HCT116 (cell line): ENCODE measurements at regions of chrX and their contacts with region 1.

Region 1: GRCh38 chrX:2474280-2474962 is 26.4 kb downstream of the DHRSX start:
- DNase-seq: peak; percentile 94
- ATAC-seq: peak; percentile 34
- H3K4me3 ChIP-seq: peak overlapping the region; percentile 26 to 43
- H3K27ac ChIP-seq: peak overlapping the region; percentile 77
- H3K4me1 ChIP-seq: peaks cover 22 to 78% of the 10 kb centered on the region in 2 experiments; a peak in 3 of 4 replicates
- H3K27me3 ChIP-seq: no peaks in the 10 kb centered on the region
- CTCF ChIP-seq: no peak
- POLR2A ChIP-seq: no peak
- RAD21 ChIP-seq: no peak

Region 2: DNA sequence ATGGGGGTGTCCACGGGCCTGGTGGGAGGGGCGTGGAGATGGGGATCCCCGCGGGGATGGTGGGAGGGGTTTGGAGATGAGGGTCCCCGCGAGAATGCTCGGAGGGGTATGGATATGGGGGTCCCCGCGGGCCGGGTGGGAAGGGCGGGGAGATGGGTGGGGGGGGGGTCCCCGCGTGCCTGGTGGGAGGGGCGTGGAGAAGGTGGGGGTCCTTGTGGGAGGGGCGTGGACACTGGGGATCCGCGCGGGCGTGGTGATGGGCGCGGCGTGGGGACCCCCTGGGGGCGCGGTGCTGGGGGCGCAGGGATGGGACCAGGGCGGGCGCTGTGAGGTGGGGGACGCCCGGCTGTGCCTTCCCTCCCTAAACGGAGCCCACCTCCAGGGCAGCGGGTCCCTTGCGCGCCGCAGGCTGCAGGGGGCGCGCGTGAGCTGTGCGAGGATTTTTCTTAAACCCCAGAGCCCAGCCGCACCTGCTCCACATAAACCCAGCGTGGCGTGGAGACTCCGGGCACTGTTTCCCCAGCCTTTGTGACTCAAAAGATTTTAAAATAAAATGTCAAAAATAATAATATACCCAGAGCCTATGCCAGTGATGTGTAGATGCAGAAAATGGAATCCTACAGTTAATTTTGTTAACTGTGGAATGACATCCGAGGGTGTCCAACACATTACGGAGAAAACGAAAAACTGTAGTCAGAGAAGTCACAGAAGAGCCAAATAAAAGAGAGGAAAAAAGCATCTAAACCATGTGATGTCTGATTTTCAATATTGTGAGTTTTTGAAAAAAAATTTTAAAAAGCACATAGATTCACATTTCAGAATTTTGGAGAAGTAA is 1020.3 kb before region 1 on chrX:
- CTCF ChIA-PET with region 1: no interaction called
- POLR2A ChIA-PET with region 1: no interaction called
- RAD21 ChIA-PET with region 1: no interaction called
- intact Hi-C with region 1: loop called (anchors 5 kb)
- DNase-seq: peak; percentile 36
- ATAC-seq: peak; percentile 41
- H3K4me3 ChIP-seq: no peak overlapping the region
- H3K27ac ChIP-seq: no peak overlapping the region
- H3K4me1 ChIP-seq: peaks cover 0 to 8% of the 10 kb centered on the region in 2 experiments; a peak in 1 of 4 replicates
- H3K27me3 ChIP-seq: 0 out of 2 replicates have a peak, but pooled peaks cover 2% of the 10 kb centered on the region
- CTCF ChIP-seq: peak in 2 of 3 experiments; percentile 71 to 86; a peak in 4 of 6 replicates
- POLR2A ChIP-seq: no peak
- RAD21 ChIP-seq: no peak

Region 3: DNA sequence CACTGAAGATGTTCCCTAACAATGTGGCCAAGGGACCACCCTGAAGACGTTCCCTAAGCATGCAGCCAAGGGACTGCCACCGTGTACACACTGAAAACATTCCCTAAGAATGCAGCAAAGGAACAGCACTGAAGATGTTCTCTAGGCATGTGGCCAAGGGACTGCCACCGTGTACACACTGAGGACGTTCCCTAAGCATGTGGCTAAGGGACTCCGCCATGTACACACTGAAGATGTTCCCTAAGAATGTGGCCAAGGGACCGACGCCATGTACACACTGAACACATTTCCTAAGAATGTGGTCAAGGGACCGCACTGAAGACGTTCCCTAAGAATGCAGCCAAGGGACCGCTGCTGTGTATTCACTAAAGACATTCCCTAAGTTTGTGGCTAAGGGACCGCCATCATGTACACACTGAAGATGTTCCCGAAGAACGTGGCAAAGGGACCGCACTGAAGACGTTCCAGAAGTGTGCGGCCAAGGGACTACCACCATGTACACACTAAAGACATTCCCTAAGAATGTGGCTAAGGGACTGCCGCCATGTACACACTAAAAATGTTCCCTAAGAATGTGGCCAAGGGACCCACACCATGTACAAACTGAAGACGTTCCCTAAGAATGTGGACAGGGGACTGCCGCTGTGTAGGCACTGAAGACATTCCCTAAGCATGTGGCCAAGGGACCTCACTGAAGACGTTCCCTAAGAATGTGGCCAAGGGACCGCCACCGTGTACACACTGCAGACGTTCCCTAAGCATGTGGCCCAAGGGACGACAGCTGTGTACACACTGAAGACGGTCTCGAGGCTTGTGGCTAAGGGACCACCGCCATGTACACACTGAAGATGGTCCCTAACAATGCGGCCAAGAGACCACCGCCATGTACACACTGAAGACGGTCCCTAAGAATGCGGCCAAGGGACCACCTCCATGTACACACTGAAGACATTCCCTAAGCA is 28.5 kb before region 1 on chrX:
- CTCF ChIA-PET with region 1: no interaction called
- POLR2A ChIA-PET with region 1: no interaction called
- RAD21 ChIA-PET with region 1: no interaction called
- intact Hi-C with region 1: loop called (anchors 1 kb)
- DNase-seq: peak; percentile 97
- ATAC-seq: peak; percentile 78
- H3K4me3 ChIP-seq: peak overlapping the region in 1 of 2 experiments; percentile 19; a peak in 1 of 4 replicates
- H3K27ac ChIP-seq: peak overlapping the region; percentile 74
- H3K4me1 ChIP-seq: peaks cover 7 to 32% of the 10 kb centered on the region in 2 experiments
- H3K27me3 ChIP-seq: no peaks in the 10 kb centered on the region
- CTCF ChIP-seq: no peak
- POLR2A ChIP-seq: no peak
- RAD21 ChIP-seq: no peak

Region 4: DNA sequence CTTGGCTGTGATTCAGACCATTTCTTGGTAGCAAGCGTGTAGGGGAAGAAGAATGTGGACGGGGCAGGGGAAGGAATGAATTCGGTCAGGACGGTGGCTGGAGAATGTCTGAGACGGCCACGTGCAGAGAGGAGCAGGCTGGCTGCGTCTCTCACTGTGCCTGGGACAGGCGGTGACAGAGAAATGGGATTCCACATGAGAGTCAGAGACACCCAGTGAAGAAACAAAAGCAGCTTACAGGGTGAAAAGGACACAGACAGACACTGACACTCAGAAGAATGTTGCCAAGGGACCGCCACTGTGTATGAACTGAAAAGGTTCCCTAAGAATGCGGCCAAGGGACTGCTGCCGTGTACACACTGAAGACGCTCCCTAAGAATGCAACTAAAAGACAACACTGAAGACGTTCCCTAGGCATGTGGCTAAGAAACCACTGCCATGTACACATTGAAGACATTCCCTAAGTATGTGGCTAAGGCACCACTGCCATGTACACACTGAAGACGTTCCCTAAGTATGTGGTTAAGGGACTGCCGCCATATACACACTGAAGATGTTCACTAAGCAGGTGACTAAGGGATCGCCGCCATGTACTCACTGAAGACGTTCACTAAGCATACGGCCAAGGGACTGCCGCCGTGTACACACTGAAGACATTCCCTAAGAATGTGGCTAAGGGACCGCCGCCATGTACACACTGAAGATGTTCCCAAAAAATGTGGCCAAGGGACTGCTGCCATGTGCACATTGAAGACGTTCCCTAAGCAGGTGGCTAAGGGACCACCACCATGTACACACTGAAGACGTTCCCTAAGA is 22.7 kb before region 1 on chrX:
- CTCF ChIA-PET with region 1: no interaction called
- POLR2A ChIA-PET with region 1: no interaction called
- RAD21 ChIA-PET with region 1: no interaction called
- intact Hi-C with region 1: loop called (anchors 1 kb)
- DNase-seq: peak; percentile 93
- ATAC-seq: peak; percentile 72
- H3K4me3 ChIP-seq: peak overlapping the region; percentile 25 to 50
- H3K27ac ChIP-seq: peak overlapping the region; percentile 93
- H3K4me1 ChIP-seq: peaks cover 12 to 50% of the 10 kb centered on the region in 2 experiments
- H3K27me3 ChIP-seq: no peaks in the 10 kb centered on the region
- CTCF ChIP-seq: no peak
- POLR2A ChIP-seq: no peak
- RAD21 ChIP-seq: no peak

Region 5: DNA sequence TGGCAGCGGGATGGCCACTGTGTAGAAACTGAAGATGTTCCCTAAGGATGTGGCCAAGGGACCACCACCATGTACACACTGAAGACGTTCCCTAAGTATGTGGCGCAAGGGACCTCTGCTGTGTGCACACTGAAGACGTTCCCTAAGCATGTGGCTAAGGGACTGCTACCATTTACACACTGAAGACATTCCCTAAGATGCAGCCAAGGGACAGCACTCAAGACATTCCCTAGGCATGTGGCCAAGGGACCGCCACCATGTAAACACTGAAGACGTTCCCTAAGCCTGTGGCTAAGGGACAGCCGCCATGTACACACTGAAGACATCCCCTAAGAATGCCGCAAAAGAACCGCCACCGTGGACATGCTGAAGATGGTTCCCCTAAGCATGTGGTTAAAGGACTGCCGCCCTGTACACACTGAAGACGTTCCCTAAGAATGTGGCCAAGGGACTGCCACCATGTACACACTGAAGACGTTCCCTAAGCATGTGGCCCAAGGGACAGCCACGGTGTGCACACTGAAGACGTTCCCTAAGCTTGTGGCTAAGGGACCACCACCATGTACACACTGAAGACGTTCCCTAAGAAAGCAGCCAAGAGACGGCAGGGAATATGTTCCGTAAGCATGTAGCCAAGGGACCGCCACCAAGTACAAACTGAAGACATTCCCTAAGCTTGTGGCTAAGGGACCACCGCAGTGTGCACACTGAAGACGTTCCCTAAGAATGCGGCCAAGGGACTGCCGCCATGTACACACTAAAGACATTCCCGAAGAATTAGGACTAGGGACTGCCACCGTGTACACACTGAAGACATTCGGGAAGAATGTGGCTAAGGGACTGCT is 16.9 kb before region 1 on chrX:
- CTCF ChIA-PET with region 1: no interaction called
- POLR2A ChIA-PET with region 1: no interaction called
- RAD21 ChIA-PET with region 1: no interaction called
- intact Hi-C with region 1: loop called (anchors 1 kb)
- DNase-seq: peak; percentile 98
- ATAC-seq: peak; percentile 67
- H3K4me3 ChIP-seq: peak overlapping the region; percentile 24 to 47
- H3K27ac ChIP-seq: peak overlapping the region; percentile 93
- H3K4me1 ChIP-seq: peaks cover 12 to 44% of the 10 kb centered on the region in 2 experiments
- H3K27me3 ChIP-seq: no peaks in the 10 kb centered on the region
- CTCF ChIP-seq: no peak
- POLR2A ChIP-seq: no peak
- RAD21 ChIP-seq: no peak

Region 6: DNA sequence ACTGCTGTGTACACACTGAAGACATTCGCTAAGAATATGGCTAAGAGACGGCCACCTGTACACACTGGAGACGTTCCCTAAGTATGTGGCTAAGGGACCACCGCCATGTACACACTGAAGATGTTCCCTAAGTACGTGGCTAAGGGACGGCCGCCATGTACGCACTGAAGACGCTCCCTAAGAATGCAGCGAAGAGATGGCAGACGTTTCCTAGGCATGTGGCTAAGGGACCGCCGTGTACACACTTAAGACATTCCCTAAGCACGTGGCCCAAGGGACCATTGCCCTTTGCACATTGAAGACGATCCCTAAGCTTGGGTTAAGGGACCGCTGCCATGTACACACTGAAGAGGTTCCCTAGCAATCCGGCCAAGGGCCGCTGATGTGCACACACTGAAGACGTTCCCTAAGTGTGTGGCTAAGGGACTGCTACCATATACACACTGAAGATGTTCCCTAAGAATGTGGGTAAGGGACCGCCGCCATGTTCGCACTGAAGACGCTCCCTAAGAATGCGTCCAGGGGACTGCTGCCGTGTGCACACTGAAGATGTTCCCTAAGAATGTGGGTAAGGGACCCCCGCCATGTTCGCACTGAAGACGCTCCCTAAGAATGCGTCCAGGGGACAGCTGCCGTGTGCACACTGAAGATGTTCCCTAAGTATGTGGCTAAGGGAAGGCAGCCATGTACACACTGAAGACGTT is 10.3 kb before region 1 on chrX:
- CTCF ChIA-PET with region 1: no interaction called
- POLR2A ChIA-PET with region 1: no interaction called
- RAD21 ChIA-PET with region 1: no interaction called
- intact Hi-C with region 1: loop called (anchors 1 kb)
- DNase-seq: peak; percentile 99
- ATAC-seq: peak; percentile 71
- H3K4me3 ChIP-seq: peak overlapping the region; percentile 47 to 57
- H3K27ac ChIP-seq: peak overlapping the region; percentile 92
- H3K4me1 ChIP-seq: peaks cover 10 to 51% of the 10 kb centered on the region in 2 experiments; a peak in 3 of 4 replicates
- H3K27me3 ChIP-seq: no peaks in the 10 kb centered on the region
- CTCF ChIP-seq: no peak
- POLR2A ChIP-seq: no peak
- RAD21 ChIP-seq: no peak

Region 7: GRCh38 chrX:2595258-2595657 is 120.8 kb after region 1 on chrX:
- CTCF ChIA-PET with region 1: no interaction called
- POLR2A ChIA-PET with region 1: no interaction called
- RAD21 ChIA-PET with region 1: no interaction called
- intact Hi-C with region 1: loop called (anchors 1 kb)
- DNase-seq: no peak
- ATAC-seq: no peak
- H3K4me3 ChIP-seq: no peak overlapping the region
- H3K27ac ChIP-seq: no peak overlapping the region
- H3K4me1 ChIP-seq: peaks cover 10 to 36% of the 10 kb centered on the region in 2 experiments; a peak in 3 of 4 replicates
- H3K27me3 ChIP-seq: no peaks in the 10 kb centered on the region
- CTCF ChIP-seq: no peak
- POLR2A ChIP-seq: no peak
- RAD21 ChIP-seq: no peak